T-cell (primary cell): ENCODE measurements at regions of chr17 and their contacts with region 1.

Region 1: DNA sequence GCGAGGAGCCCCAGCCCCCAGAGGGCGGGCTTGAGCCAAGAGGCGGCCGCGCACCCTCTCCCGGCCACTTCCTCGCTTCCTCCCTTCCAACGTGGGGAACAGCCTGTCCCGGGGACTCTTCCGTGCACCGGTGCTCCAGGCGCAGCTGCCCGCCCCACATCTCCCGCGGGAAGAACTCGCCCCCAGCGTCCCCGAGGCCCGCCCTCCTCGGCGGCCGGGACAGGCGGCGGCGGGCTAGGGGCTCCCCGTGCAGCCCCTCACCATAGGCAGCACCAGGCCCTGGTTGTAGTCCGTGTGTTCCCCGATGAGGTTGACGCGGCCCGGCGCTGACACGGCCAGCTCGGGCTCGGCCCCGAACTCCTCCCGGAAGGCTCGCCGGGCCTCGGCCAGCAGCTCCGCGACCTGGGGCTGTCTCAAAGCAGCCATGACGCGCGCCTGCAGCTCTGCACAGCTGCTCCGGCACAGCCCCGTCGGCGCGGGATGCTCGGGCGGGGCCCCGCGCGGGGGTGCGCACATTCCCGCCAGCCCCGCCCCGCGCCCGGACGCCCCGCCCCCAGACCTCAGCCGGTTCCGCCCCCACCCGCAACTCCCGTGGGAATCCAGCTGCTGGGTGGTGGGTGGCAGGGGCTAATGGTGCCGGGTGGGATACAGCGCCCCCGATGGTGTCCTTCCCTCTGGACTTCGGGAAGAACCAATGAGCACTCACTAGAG is at the start of gene GALK1:
- DNase-seq: peak; percentile 38 to 84 (median 61)
- ATAC-seq: peak; percentile 76 to 96 (median 96)
- H3K4me3 ChIP-seq: peak within 1 kb of the TSS; percentile 60 to 67
- H3K4me3 Mint-ChIP-seq: peak within 1 kb of the TSS; percentile 70 to 77 (median 72)
- H3K27ac ChIP-seq: peak within 1 kb of the TSS; percentile 61
- H3K27ac Mint-ChIP-seq: peak within 1 kb of the TSS; percentile 31 to 79
- H3K4me1 ChIP-seq: peaks cover 0 to 23% of the 10 kb centered on the region in 2 experiments
- H3K4me1 Mint-ChIP-seq: peaks cover 13 to 22% (median 19%) of the 10 kb centered on the region in 3 donors
- H3K27me3 ChIP-seq: no peaks in the 10 kb centered on the region
- H3K27me3 Mint-ChIP-seq: no peaks in the 10 kb centered on the region
- total RNA-seq, gene GALK1: 8.4 to 35.7 (median 26.7) TPM

Region 2: DNA sequence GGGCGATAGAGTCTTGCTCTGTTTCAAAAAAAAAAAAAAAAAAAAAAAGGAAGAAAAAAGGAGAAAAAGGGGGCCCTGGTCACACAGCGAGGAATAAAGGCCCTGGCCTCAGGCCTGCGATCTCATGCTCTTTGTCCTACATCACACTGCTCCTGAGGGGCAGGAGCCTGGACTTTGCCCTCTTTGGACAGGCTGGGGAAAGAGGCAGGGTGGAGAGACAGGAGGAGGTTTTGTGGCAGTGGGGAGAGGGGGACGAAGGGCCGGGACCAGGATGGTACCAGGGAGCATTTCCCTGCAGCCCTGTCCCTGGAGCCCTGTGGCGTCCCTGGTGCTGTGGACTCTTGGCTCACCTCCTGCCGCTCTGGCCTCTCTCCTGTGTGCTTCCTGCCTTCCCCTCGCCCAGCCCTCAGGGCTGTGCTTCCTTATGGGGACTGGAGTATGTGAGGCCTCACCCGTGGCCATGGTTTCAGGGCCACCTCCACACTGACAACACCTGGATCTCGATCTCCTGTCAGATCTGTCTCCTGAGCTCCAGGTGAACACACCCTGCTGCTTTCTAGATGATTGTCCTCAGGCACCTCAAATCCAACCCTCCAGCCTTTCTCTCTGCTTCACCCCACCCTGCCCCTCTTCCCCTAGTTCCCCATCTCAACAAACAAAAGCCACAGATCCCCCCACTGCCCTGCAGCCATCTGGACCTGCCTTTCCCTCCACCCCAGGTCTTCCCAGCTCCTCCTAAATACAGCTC is 455.7 kb before region 1 on chr17:
- CTCF ChIA-PET with region 1: no interaction called
- POLR2A ChIA-PET with region 1: no interaction called
- DNase-seq: no peak
- ATAC-seq: no peak
- H3K4me3 ChIP-seq: no peak overlapping the region
- H3K4me3 Mint-ChIP-seq: no peak overlapping the region
- H3K27ac ChIP-seq: no peak overlapping the region
- H3K27ac Mint-ChIP-seq: no peak overlapping the region
- H3K4me1 ChIP-seq: peaks cover 0 to 9% of the 10 kb centered on the region in 2 experiments
- H3K4me1 Mint-ChIP-seq: peaks cover 5 to 7% (median 5%) of the 10 kb centered on the region in 3 donors
- H3K27me3 ChIP-seq: no peaks in the 10 kb centered on the region
- H3K27me3 Mint-ChIP-seq: no peaks in the 10 kb centered on the region

Region 3: DNA sequence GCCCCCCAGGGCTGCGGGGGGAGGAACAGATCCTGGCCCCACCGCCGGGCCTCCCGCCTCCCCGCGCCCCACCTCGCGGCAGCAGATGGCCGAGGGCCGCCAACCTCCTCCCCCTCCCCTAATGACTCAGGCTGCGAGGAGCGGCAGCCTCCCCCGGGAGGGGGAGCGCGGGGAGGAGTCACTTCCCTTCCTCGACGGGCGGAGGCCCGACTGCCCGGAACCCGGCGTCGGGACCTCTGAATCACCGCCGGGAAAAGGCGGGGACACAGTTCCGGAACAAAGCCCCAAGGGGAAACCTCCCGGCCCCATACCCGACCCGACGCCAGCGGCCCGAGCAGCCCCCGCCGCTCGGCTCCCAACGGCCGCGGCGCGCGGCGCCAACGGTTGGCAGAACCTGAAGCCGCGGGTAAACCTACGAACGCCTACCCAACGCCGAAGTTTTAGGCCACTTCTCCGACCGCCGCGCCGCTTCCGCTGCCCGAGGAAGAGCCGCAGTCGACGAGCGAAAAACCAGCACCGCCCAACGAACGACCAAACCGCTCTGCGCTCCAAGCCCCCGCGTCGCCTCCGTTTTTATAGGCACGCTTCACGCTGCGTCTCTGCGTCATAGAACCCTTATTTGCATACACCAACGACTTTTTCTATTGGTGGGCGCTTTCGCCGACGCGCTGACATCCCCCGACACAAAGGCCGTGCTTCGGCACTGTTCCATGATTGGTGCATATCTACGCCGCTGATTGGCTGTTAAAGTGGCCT is 14.5 kb after region 1 on chr17:
- CTCF ChIA-PET with region 1: interaction called in 1 of 2 experiments, 9 read pairs
- POLR2A ChIA-PET with region 1: interaction called, 10 to 17 read pairs
- DNase-seq: peak; percentile 86 to 99 (median 94)
- ATAC-seq: peak; percentile 71 to 74 (median 72)
- H3K4me3 ChIP-seq: peak overlapping the region; percentile 87 to 89
- H3K4me3 Mint-ChIP-seq: peak overlapping the region; percentile 89 to 95 (median 93)
- H3K27ac ChIP-seq: peak overlapping the region; percentile 89
- H3K27ac Mint-ChIP-seq: peak overlapping the region; percentile 97 to 99
- H3K4me1 ChIP-seq: peaks cover 27 to 35% of the 10 kb centered on the region in 2 experiments
- H3K4me1 Mint-ChIP-seq: peaks cover 58 to 63% (median 60%) of the 10 kb centered on the region in 3 donors
- H3K27me3 ChIP-seq: no peaks in the 10 kb centered on the region
- H3K27me3 Mint-ChIP-seq: peaks cover 0 to 1% of the 10 kb centered on the region in 2 donors